Activated CD4-positive, alpha-beta T cell treated with anti-CD3 and anti-CD28 coated beads, Interleukin-2, amount 10 ng/mL, durations not matched to agents 7 days and 5 days (primary cell): ENCODE measurements at regions of chr9 and their contacts with region 1.

Region 1: DNA sequence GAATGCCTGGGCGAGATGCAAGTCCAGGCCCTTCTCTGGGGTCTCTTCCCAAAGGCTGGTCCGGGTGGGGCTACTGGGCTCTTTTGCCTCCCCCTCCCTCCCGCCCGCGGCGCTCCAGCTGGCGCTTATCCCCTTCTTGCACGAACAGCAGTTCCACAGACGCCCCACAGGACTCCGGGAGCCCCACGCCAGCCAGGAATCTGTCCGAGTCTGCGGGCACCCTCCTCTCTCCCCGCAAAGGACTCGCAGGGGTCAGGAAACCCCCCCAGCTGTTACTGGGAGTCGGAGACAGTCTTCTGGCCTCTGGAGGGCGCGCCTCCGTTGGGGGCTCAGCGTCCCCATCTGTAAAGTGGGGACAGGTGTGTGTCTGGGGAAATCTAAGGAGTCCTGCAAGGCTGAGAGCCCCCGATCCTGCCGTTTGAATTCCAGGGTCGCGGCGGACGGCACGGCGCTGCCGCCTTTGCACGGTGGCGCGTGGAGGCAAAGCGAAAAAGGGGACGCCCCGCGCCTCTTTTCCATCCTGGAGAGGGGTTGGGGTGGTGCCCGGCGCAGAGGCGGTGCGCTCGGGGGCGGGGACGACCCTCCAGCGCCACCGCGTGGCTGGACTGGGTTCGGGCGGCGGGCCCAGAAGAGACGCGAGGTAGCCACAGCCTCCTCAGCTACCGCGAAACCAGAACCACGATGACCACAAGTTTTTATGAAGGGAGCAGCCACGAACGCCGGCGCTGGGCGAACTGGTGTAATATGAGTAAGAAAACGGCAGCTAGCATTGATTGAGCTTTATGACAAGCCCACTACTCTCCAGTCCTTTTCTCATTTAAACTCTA is 2.9 kb upstream of the CCIN start:
- DNase-seq: peak; percentile 82
- H3K4me3 Mint-ChIP-seq: peak overlapping the region; percentile 67
- H3K27ac Mint-ChIP-seq: no peak overlapping the region
- H3K4me1 Mint-ChIP-seq: peaks cover 19% of the 10 kb centered on the region
- H3K27me3 Mint-ChIP-seq: peaks cover 7% of the 10 kb centered on the region

Region 2: GRCh38 chr9:36102742-36103495 is 63.4 kb before region 1 on chr9:
- CTCF ChIA-PET with region 1: interaction called, 91 read pairs
- POLR2A ChIA-PET with region 1: interaction called, 3 read pairs
- DNase-seq: peak; percentile 92
- H3K4me3 Mint-ChIP-seq: no peak overlapping the region
- H3K27ac Mint-ChIP-seq: no peak overlapping the region
- H3K4me1 Mint-ChIP-seq: peaks cover 8% of the 10 kb centered on the region
- H3K27me3 Mint-ChIP-seq: no peaks in the 10 kb centered on the region

Region 3: DNA sequence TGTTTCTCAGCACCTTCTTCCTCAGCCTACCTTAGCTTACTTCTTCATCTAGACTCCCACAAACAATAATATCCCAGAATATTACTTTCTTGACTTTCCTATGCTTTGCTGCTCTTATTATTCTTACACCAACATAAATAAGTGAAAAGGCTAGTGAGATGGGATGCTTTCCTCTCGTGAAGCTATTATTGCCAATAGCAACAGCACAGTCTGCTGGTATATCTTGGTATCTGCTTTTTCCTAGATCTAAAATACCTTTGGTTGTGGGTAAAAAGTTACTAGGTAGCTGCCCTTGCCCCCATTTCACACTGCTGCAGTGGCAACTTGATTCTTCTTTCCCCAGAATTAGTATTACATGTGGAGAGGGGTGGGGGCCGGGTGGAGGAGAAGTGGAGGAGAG is 55.9 kb before region 1 on chr9:
- CTCF ChIA-PET with region 1: interaction called, 17 read pairs
- POLR2A ChIA-PET with region 1: no interaction called
- DNase-seq: no peak
- H3K4me3 Mint-ChIP-seq: no peak overlapping the region
- H3K27ac Mint-ChIP-seq: no peak overlapping the region
- H3K4me1 Mint-ChIP-seq: no peaks in the 10 kb centered on the region
- H3K27me3 Mint-ChIP-seq: no peaks in the 10 kb centered on the region

Region 4: GRCh38 chr9:36136272-36136893 is 29.9 kb before region 1 on chr9 and contains the start of gene GLIPR2:
- CTCF ChIA-PET with region 1: interaction called, 19 read pairs
- POLR2A ChIA-PET with region 1: no interaction called
- DNase-seq: peak; percentile 81
- H3K4me3 Mint-ChIP-seq: peak within 1 kb of the TSS; percentile 85
- H3K27ac Mint-ChIP-seq: peak within 1 kb of the TSS; percentile 86
- H3K4me1 Mint-ChIP-seq: peaks cover 51% of the 10 kb centered on the region
- H3K27me3 Mint-ChIP-seq: peaks cover 20% of the 10 kb centered on the region
- total RNA-seq, gene GLIPR2: 53.9 to 58.4 TPM

Region 5: DNA sequence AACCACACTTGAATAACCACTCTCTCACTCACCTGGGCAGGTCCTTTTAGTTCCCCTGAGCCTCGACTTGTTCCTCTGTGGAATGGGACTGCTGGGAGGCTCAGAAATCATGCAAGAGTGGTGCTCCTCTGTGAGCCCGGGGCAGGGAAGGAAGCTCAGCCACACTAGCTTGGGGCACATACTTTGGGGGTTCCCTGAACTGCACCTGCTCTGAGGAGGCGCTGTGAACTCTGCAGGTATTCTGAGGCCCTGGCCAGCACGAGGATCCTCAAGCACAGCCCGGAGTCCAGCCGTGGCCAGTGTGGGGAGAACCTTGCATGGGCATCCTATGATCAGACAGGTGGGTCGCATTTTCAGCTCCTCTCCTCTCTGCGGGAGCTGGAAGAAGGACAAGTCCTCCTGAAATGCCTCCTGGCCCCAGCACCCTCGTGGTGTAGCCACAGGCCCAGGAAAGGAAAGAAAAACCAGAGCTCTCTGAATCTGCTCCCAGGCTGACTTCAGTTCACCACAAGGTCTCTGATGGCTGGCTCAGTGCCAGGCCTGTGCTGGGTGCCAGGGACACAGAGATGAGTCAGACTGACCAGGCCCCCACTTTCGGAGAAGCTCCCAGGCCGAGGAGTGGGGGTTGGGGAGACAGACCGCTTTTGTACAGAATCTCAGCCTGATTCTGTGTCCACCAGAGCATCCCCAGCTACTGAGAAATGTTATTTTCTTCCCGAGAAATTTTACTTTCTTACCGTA is 17.8 kb before region 1 on chr9:
- CTCF ChIA-PET with region 1: interaction called, 19 read pairs
- POLR2A ChIA-PET with region 1: no interaction called
- DNase-seq: peak; percentile 62
- H3K4me3 Mint-ChIP-seq: no peak overlapping the region
- H3K27ac Mint-ChIP-seq: peak overlapping the region; percentile 67
- H3K4me1 Mint-ChIP-seq: peaks cover 92% of the 10 kb centered on the region
- H3K27me3 Mint-ChIP-seq: no peaks in the 10 kb centered on the region

Region 6: GRCh38 chr9:36190388-36191287 is 24.3 kb after region 1 on chr9 and contains the start of gene CLTA:
- CTCF ChIA-PET with region 1: interaction called, 10 read pairs
- POLR2A ChIA-PET with region 1: interaction called, 3 read pairs
- DNase-seq: peak; percentile 98
- H3K4me3 Mint-ChIP-seq: peak within 1 kb of the TSS; percentile 97
- H3K27ac Mint-ChIP-seq: peak within 1 kb of the TSS; percentile 93
- H3K4me1 Mint-ChIP-seq: peaks cover 55% of the 10 kb centered on the region
- H3K27me3 Mint-ChIP-seq: peaks cover 8% of the 10 kb centered on the region
- total RNA-seq, gene CLTA: 156 to 158 TPM

Region 7: DNA sequence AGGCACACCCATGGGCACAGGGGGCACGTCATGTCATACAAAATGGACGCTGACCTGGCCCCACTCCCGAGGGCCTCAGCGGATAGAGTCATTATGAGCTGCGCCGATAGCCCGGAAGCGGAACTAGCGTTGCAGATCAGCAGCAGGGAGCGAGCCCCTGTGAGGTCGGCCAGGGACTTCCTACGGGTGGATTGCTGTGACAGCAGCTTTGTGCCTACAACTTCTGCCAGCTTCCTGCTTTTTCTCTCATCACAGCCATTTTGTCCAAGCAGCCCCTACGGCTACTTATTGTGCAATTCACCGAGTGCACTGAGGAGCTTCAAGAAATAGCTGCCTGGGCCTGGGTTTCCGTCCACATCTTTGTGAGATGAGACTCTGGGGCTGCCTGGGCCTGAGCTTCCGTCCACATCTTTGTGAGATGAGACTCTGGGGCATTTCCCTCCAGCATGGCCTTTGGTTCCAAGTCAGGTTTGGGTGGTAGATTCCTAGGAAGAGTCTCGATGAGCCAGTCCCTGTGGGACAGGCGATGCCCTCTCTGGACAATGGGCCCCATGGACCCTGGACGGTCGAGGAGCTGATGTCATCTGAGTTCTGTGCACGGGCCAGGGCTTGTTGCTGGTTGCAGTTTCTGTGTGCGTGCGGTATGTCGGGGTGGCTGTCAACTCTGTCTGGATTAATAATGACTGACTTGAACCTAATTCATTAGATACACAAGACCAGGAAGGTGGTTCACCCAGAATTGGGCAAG is 158.9 kb after region 1 on chr9:
- CTCF ChIA-PET with region 1: no interaction called
- POLR2A ChIA-PET with region 1: no interaction called
- DNase-seq: no peak
- H3K4me3 Mint-ChIP-seq: no peak overlapping the region
- H3K27ac Mint-ChIP-seq: no peak overlapping the region
- H3K4me1 Mint-ChIP-seq: peaks cover 4% of the 10 kb centered on the region
- H3K27me3 Mint-ChIP-seq: no peaks in the 10 kb centered on the region